ENCODE measurements at regions of chr19 and their contacts with region 1.

Region 1: GRCh38 chr19:57362997-57363705 is at the starts of genes TRAPPC2B and ZNF547:
- DNase-seq: peak; percentile 98
- H3K4me3 Mint-ChIP-seq: peak within 1 kb of the TSS; percentile 89
- H3K27ac Mint-ChIP-seq: peak within 1 kb of the TSS; percentile 97
- H3K4me1 Mint-ChIP-seq: peaks cover 17% of the 10 kb centered on the region
- H3K27me3 Mint-ChIP-seq: no peaks in the 10 kb centered on the region
- total RNA-seq, gene TRAPPC2B: 3.8 and 4.7 TPM in 2 replicates
- total RNA-seq, gene ZNF547: 0.69 and 0.93 TPM in 2 replicates

Region 2: GRCh38 chr19:56567274-56568120 is 795.7 kb before region 1 on chr19 and contains the start of gene ZNF470:
- intact Hi-C with region 1: loop called (anchors 1 kb)
- DNase-seq: peak; percentile 82
- H3K4me3 Mint-ChIP-seq: peak within 1 kb of the TSS; percentile 87
- H3K27ac Mint-ChIP-seq: peak within 1 kb of the TSS; percentile 89
- H3K4me1 Mint-ChIP-seq: no peaks in the 10 kb centered on the region
- H3K27me3 Mint-ChIP-seq: no peaks in the 10 kb centered on the region
- total RNA-seq, gene ZNF470: 1.2 and 2.4 TPM in 2 replicates

Region 3: GRCh38 chr19:57240311-57241090 is 122.7 kb before region 1 on chr19 and contains the start of gene ZNF805:
- intact Hi-C with region 1: loop called (anchors 1 kb)
- DNase-seq: peak; percentile 93
- H3K4me3 Mint-ChIP-seq: peak within 1 kb of the TSS; percentile 92
- H3K27ac Mint-ChIP-seq: peak within 1 kb of the TSS; percentile 97
- H3K4me1 Mint-ChIP-seq: peaks cover 14% of the 10 kb centered on the region
- H3K27me3 Mint-ChIP-seq: no peaks in the 10 kb centered on the region
- total RNA-seq, gene ZNF805: 6.9 and 8.4 TPM in 2 replicates

Region 4: GRCh38 chr19:57320180-57321084 is 42.7 kb before region 1 on chr19 and contains the start of gene ZNF543:
- intact Hi-C with region 1: loop called (anchors 1 kb)
- DNase-seq: peak; percentile 90
- H3K4me3 Mint-ChIP-seq: peak within 1 kb of the TSS; percentile 89
- H3K27ac Mint-ChIP-seq: peak within 1 kb of the TSS; percentile 97
- H3K4me1 Mint-ChIP-seq: peaks cover 28% of the 10 kb centered on the region
- H3K27me3 Mint-ChIP-seq: peaks cover 14% of the 10 kb centered on the region
- total RNA-seq, gene ZNF543: 5.1 and 5.4 TPM in 2 replicates

Region 5: DNA sequence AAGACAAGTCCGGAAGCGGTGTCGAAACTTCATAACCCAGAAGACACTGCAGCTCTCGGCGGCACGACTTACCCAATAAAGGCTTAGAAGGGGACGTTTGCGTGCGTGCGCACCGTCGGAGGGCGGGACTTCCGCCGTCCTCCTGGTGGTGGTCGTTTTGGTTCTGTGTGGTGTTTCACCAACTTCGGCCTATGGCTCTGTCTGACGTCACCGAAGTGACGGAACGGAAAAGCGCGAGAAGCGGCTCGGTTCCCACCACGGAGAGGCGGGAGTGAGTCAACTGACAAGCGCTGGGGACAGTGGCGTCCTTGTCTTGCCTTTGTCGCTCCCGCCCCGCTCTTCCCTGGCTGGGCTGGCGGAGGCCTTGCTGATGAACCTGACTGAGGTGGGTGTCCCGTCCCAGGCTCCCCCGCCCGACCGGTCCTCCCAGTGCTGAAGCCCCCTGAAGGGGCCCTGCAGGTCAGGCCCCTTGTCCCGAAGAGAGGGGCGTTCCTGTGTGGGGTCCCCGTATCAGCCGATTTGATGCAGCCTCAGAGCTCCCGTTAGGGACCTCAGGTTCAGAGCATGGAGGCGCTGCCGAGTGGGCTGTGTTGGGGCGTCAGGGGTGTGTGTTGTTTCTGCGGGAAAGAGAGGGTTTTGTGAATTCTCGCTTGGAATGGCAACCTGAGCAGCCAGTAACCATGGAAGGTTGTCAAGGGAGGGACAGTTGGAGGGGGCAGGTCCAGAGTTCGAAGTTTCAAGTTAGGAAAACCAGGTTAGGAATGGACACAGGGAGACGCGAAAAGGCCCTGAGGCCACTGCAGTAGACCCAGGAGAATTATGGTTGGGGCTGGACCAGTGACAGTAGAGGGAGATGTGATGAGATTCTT is 26.8 kb after region 1 on chr19 and contains the start of gene ZNF548:
- intact Hi-C with region 1: loop called (anchors 1 kb)
- DNase-seq: peak; percentile 92
- H3K4me3 Mint-ChIP-seq: peak within 1 kb of the TSS; percentile 94
- H3K27ac Mint-ChIP-seq: peak within 1 kb of the TSS; percentile 94
- H3K4me1 Mint-ChIP-seq: peaks cover 30% of the 10 kb centered on the region
- H3K27me3 Mint-ChIP-seq: no peaks in the 10 kb centered on the region
- total RNA-seq, gene ZNF548: 11.3 and 12.1 TPM in 2 replicates

Region 6: DNA sequence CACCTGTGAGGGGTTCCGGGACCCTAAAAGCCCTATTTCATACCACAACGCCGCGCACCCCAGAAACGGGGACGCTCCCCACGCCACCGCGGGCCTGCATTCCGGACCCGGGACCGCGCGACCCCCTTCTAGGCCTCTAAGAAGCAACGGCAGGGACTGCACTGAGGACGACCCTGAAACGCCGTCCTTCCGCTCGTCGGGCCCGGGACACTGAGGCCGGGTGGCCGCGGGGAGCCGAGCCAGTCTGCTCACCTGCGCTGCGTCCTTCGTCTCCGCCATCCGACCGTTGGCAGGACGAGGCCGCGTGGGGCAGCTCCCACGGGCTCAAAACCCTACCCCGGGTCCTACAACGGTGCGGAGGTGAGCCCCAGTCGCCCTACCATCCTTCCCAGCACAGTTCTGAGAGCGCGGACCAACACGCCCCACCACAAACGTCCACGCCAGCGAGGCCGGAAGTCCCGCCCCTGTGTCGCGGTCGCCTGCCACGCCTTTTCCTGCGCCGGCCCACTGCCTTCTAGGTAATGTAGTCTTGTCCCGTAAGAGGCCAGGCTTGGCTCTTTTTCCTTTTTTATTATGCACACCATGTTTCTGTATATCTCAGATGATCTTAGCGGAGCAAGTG is 196.4 kb after region 1 on chr19 and contains the start of gene ZNF550:
- intact Hi-C with region 1: loop called (anchors 1 kb)
- DNase-seq: peak; percentile 84
- H3K4me3 Mint-ChIP-seq: peak within 1 kb of the TSS; percentile 98
- H3K27ac Mint-ChIP-seq: peak within 1 kb of the TSS; percentile 88
- H3K4me1 Mint-ChIP-seq: peaks cover 28% of the 10 kb centered on the region
- H3K27me3 Mint-ChIP-seq: no peaks in the 10 kb centered on the region
- total RNA-seq, gene ZNF550: 7.2 and 7.5 TPM in 2 replicates

Region 7: GRCh38 chr19:58182989-58183816 is 820.1 kb after region 1 on chr19 and contains the start of gene ZNF274:
- intact Hi-C with region 1: loop called (anchors 1 kb)
- DNase-seq: peak; percentile 90
- H3K4me3 Mint-ChIP-seq: peak within 1 kb of the TSS; percentile 93
- H3K27ac Mint-ChIP-seq: peak within 1 kb of the TSS; percentile 99
- H3K4me1 Mint-ChIP-seq: peaks cover 16% of the 10 kb centered on the region
- H3K27me3 Mint-ChIP-seq: no peaks in the 10 kb centered on the region
- total RNA-seq, gene ZNF274: 18.2 and 21.2 TPM in 2 replicates